Prostate gland (tissue), 2 donors: ENCODE measurements at regions of chr17 and their contacts with region 1.

Region 1: DNA sequence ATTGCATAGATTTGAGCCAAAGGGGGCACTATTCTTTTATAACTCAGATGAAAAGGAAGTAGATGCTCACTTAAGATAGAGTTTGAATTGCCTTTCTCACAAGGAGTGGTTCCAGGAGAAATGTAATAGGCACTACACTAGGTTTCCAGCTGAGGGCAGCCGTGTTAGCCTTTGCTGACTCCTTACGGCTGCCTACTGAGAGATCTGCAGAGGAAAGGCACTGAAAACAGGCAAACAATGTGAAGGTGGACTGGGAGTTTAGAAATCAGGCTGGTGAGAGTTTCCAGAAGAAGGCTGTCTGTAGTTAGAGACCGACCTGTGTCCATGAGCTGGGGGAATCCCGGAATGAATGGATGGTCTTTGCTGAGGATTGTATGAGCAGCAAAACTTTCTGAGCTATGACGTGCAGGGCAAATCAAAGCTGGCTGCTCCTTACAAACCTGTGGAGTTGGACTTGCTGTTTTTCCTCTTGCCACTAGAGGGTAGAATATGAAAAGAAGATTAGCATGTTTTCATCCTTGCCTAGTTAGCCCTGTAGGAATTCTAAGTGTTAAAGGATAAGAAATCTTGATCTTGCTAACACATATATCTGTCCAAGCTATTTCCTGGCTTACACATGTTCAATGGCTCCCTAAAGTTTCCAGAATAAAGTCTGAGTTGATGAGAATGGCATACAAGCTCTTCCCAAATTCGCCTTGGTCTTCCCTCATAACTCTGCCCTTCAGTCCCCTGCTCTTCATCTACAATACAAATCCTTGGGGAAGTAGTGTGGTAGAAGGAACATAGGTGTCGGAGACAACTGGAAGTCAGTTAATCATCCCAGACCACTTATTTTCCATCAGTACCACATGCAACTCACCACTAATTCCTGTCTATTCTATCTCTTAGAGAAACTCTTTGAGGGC is 20.1 kb upstream of the TAOK1 start:
- DNase-seq: peak; percentile 57
- H3K4me3 ChIP-seq: no peak overlapping the region
- H3K27ac ChIP-seq: no peak overlapping the region
- H3K4me1 ChIP-seq: no peaks in the 10 kb centered on the region
- H3K27me3 ChIP-seq: no peaks in the 10 kb centered on the region
- CTCF ChIP-seq: peak; percentile 54 to 84 (median 80)
- POLR2A ChIP-seq: no peak

Region 2: GRCh38 chr17:29533976-29534375 is 163.9 kb after region 1 on chr17:
- intact Hi-C with region 1: loop called (anchors 2 kb)
- DNase-seq: no peak
- H3K4me3 ChIP-seq: no peak overlapping the region
- H3K27ac ChIP-seq: no peak overlapping the region
- H3K4me1 ChIP-seq: no peaks in the 10 kb centered on the region
- H3K27me3 ChIP-seq: no peaks in the 10 kb centered on the region
- CTCF ChIP-seq: no peak
- POLR2A ChIP-seq: no peak

Region 3: DNA sequence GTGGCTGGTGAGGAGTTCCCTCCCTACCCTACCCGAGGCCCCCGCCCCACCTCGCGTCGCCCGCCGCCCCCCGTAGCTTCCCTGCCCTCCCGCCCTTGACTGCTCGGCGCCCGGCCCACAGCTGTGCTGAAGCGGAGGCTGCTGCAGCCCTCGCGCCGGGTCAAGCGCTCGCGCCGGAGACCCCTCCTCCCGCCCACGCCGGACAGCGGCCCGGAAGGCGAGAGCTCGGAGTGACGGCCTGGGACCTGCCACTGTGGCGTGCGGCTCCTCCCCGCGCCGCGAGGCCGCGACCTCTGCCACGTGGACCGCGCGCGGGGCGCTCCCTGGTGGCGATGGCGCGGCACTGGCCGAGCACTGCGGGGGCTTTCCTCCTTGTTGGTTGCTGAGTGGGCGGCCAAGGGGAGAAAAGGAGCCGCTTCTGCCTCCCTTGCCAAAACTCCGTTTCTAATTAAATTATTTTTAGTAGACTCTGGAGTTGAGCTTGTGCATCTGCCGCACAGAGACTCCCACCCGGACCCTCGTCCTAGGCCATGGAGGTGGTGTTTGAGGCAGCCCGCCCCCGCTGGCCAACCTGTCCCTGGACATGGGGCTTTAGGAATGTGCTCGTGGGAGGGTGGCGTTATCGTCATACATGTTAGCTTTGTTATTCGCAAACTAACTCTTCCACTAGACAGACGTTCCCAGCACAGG is 202.8 kb after region 1 on chr17:
- intact Hi-C with region 1: no loop called
- DNase-seq: no peak
- H3K4me3 ChIP-seq: peak overlapping the region in 1 of 2 donors; percentile 24
- H3K27ac ChIP-seq: no peak overlapping the region
- H3K4me1 ChIP-seq: peaks cover 4% of the 10 kb centered on the region
- H3K27me3 ChIP-seq: no peaks in the 10 kb centered on the region
- CTCF ChIP-seq: peak in 3 of 4 experiments; percentile 39 to 64 (median 58)
- POLR2A ChIP-seq: no peak